ENCODE measurements at regions of chr20 and their contacts with region 1.

Region 1: GRCh38 chr20:61387204-61387952 is 135.3 kb downstream of the CDH4 start:
- DNase-seq: no peak

Region 2: DNA sequence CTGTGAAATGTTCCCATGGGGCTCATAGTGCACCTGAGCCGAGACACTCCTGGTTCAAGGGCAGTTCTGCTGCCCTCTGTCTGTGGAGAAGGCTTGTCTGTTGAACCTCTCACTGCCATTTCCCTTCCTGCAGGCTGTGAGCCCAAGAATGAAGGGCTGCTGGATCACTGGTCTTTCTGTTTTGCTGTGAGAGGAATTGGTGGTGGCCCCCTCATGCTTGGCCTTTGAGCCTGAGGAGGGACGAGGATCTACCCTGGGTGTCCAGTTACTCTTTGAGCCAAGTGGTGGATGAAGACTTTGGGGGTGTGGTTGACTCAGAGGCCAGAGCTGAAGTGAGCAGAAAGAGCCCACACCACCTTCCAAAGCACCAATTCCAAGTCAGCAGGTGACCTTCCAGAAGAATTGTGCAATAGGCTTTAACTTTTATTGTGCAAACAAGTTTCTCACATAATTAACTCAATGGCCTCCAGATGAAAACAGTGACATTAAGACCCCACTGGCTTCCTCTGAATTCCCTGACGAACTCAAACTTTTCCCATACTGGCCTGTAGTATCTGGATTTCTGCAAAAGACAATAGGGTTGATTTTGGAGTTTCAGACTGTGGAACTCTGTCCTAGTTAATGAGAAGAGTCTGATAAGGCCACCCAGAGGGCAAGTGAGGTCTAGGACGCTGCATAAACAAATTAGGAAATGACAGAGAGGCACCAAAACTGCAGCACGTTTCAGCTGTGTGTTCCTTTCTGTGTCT is 1681.6 kb before region 1 on chr20:
- intact Hi-C with region 1: no loop called
- DNase-seq: no peak

Region 3: GRCh38 chr20:59948828-59949720 is 1438.3 kb before region 1 on chr20:
- intact Hi-C with region 1: loop called in 1 of 2 experiments (anchors 5 kb)
- DNase-seq: no peak

Region 4: DNA sequence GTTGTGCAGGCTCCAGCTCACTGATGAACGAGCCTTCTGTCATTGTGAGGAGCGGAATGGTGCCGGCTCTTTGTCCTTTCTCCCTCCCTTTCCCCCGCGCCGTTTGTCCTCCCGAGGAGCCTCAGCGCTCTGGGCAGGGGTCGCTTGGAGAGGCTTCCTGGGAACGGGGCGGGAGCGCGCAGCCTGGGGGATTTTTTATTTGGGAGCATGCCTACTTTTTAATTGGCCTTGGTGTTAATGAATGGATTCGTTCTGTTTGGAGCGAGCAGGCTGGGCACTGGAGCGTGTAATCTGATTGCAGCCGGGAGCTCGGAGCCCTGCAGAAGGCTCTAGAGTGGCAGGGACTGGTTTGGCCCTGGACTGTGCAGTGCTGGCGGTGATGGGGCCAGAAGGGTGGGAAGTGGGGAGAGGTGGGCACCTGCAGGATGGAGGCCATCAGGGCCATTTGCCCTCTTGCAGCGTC is 16.5 kb before region 1 on chr20:
- intact Hi-C with region 1: no loop called
- DNase-seq: peak; percentile 66

Measured in posterior vena cava (tissue), 2 donors.